ENCODE measurements at regions of chr4 and their contacts with region 1.

Region 1: GRCh38 chr4:158856852-158857251 is 88.0 kb downstream of the FNIP2 start:
- DNase-seq: no peak
- H3K4me3 ChIP-seq: no peak overlapping the region
- H3K27ac ChIP-seq: no peak overlapping the region
- H3K4me1 ChIP-seq: no peaks in the 10 kb centered on the region
- H3K27me3 ChIP-seq: no peaks in the 10 kb centered on the region
- CTCF ChIP-seq: peak; percentile 42 to 57 (median 47)
- EP300 ChIP-seq: no peak
- POLR2A ChIP-seq: no peak

Region 2: GRCh38 chr4:159077702-159078495 is 221.0 kb after region 1 on chr4:
- in situ Hi-C with region 1: no loop called
- intact Hi-C with region 1: no loop called
- DNase-seq: no peak
- H3K4me3 ChIP-seq: no peak overlapping the region
- H3K27ac ChIP-seq: peak overlapping the region in 1 of 4 donors; percentile 6
- H3K4me1 ChIP-seq: peaks cover 0 to 5% (median 0%) of the 10 kb centered on the region in 4 donors
- H3K27me3 ChIP-seq: no peaks in the 10 kb centered on the region
- CTCF ChIP-seq: no peak
- EP300 ChIP-seq: no peak
- POLR2A ChIP-seq: no peak

Region 3: GRCh38 chr4:159097785-159098184 is 240.9 kb after region 1 on chr4:
- in situ Hi-C with region 1: no loop called
- intact Hi-C with region 1: loop called (anchors 5 kb)
- DNase-seq: no peak
- H3K4me3 ChIP-seq: no peak overlapping the region
- H3K27ac ChIP-seq: no peak overlapping the region
- H3K4me1 ChIP-seq: peaks cover 0 to 5% (median 0%) of the 10 kb centered on the region in 4 donors
- H3K27me3 ChIP-seq: no peaks in the 10 kb centered on the region
- CTCF ChIP-seq: no peak
- EP300 ChIP-seq: no peak
- POLR2A ChIP-seq: no peak

Region 4: DNA sequence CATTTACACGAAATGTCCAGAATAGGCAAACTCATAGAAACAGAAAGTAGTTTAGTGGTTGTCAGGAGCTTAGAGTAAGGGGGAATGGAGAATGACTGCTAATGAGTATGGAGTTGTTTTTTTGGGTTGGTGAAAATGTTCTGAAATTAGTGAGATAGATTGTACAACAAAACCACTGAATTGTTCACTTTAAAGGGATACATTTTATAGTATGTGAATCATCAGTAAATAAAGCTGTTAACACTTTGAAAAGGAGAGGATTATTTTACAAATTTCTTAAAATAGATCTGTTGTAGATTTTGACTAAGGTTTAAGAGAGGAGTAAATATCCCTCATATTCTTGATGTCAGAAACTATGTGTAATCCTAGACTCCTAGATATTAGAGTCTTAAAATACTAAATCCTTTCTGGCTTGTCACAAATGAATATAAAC is 328.8 kb after region 1 on chr4:
- in situ Hi-C with region 1: loop called in 2 of 4 experiments (anchors 10 kb)
- intact Hi-C with region 1: loop called (anchors 2 kb)
- DNase-seq: no peak
- H3K4me3 ChIP-seq: no peak overlapping the region
- H3K27ac ChIP-seq: no peak overlapping the region
- H3K4me1 ChIP-seq: peaks cover 0 to 14% (median 6%) of the 10 kb centered on the region in 4 donors
- H3K27me3 ChIP-seq: no peaks in the 10 kb centered on the region
- CTCF ChIP-seq: no peak
- EP300 ChIP-seq: no peak
- POLR2A ChIP-seq: no peak

Region 5: DNA sequence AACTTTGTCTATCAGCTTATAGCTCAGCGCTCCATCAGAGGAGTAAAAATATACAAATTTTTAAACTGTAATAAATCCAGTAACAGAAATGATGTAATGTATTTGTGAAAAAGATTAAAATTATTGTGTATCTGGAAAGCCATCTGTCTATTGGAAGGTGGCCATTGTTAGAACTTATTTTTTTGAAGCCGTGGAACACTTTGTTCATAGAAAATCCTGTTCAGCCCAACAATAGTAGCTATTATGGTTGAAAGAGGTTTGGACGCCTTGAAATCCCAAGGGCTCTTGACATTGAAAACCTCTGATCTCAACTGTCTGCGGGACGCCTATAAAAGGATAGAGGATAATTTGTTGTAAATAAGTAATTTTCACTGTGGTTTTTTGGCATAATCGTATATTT is 344.3 kb after region 1 on chr4:
- in situ Hi-C with region 1: loop called in 3 of 4 experiments (anchors 10 kb)
- intact Hi-C with region 1: loop called (anchors 5 kb)
- DNase-seq: no peak
- H3K4me3 ChIP-seq: no peak overlapping the region
- H3K27ac ChIP-seq: no peak overlapping the region
- H3K4me1 ChIP-seq: peaks cover 0 to 24% (median 0%) of the 10 kb centered on the region in 4 donors
- H3K27me3 ChIP-seq: no peaks in the 10 kb centered on the region
- CTCF ChIP-seq: no peak
- EP300 ChIP-seq: no peak
- POLR2A ChIP-seq: no peak

Region 6: DNA sequence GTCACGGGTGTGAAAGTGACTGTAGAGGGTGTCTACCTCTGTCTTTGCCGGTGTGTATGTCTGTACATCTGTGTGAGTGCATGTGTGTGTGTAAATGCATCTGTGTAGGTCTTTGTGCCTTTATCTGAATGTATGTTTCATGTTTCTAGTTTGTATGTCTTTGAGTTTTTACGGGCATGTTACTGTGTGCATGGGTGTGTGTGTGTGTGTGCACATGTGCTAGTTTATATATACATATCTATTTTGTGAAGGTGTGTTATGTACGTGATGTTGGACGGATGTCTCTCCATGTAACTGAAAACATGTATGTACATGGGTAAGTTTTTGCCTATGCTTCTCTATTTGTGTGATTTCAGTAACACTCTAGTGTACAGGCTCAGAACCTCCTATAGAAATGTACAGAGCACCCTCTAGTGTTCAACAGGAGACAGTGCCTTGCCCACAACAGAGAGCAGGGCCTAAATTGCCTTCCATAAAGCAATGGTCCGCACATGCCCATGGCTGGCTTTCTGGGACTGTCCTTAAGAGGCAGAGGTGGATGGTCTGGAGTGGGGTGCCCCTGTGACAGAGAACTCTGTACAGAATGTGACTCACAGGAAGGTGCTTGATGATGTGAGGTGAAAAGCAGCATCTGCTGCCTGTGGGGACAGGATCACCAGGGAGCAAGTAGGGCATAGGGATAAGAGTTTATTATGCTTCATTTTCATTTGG is 589.6 kb after region 1 on chr4:
- in situ Hi-C with region 1: loop called in 3 of 4 experiments (anchors 25 kb)
- intact Hi-C with region 1: no loop called
- DNase-seq: peak; percentile 9
- H3K4me3 ChIP-seq: no peak overlapping the region
- H3K27ac ChIP-seq: no peak overlapping the region
- H3K4me1 ChIP-seq: no peaks in the 10 kb centered on the region
- H3K27me3 ChIP-seq: no peaks in the 10 kb centered on the region
- CTCF ChIP-seq: peak; percentile 60 to 82 (median 77)
- EP300 ChIP-seq: no peak
- POLR2A ChIP-seq: no peak

Region 7: DNA sequence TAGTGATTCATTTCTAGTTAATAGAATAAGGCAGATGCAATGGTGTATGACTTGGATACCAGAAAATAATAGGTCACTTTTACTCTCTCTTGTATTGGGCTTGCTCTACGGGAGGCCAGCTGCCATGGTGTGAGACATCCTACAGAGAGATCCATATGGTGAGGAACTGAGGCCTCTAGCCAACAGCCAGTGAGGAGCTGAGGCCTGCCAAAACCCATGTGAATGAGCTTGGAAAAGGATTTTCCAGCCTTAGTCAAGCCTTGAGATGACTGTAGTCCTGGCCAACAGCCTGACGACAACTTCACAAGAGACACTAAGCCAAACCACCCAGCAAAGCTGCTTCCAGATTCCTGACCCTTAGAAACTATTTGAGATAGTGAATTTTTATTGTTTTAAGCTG is 1546.2 kb after region 1 on chr4:
- in situ Hi-C with region 1: no loop called
- intact Hi-C with region 1: no loop called
- DNase-seq: no peak
- H3K4me3 ChIP-seq: no peak overlapping the region
- H3K27ac ChIP-seq: no peak overlapping the region
- H3K4me1 ChIP-seq: no peaks in the 10 kb centered on the region
- H3K27me3 ChIP-seq: no peaks in the 10 kb centered on the region
- CTCF ChIP-seq: no peak
- EP300 ChIP-seq: no peak
- POLR2A ChIP-seq: no peak